CD8-positive, alpha-beta T cell (primary cell): ENCODE measurements at regions of chr6 and their contacts with region 1.

Region 1: GRCh38 chr6:17706580-17707370 is at the start of gene NUP153:
- DNase-seq: peak; percentile 98 to 100 (median 100)
- ATAC-seq: peak; percentile 77
- H3K4me3 ChIP-seq: peak within 1 kb of the TSS; percentile 84 to 96
- H3K4me3 Mint-ChIP-seq: peak within 1 kb of the TSS; percentile 88
- H3K27ac ChIP-seq: peak within 1 kb of the TSS; percentile 99
- H3K27ac Mint-ChIP-seq: peak within 1 kb of the TSS; percentile 96
- H3K4me1 ChIP-seq: peaks cover 39% of the 10 kb centered on the region
- H3K4me1 Mint-ChIP-seq: peaks cover 40% of the 10 kb centered on the region
- H3K27me3 ChIP-seq: no peaks in the 10 kb centered on the region
- H3K27me3 Mint-ChIP-seq: no peaks in the 10 kb centered on the region
- CTCF ChIP-seq: no peak
- total RNA-seq, gene NUP153: 76.4 to 77.7 TPM

Region 2: DNA sequence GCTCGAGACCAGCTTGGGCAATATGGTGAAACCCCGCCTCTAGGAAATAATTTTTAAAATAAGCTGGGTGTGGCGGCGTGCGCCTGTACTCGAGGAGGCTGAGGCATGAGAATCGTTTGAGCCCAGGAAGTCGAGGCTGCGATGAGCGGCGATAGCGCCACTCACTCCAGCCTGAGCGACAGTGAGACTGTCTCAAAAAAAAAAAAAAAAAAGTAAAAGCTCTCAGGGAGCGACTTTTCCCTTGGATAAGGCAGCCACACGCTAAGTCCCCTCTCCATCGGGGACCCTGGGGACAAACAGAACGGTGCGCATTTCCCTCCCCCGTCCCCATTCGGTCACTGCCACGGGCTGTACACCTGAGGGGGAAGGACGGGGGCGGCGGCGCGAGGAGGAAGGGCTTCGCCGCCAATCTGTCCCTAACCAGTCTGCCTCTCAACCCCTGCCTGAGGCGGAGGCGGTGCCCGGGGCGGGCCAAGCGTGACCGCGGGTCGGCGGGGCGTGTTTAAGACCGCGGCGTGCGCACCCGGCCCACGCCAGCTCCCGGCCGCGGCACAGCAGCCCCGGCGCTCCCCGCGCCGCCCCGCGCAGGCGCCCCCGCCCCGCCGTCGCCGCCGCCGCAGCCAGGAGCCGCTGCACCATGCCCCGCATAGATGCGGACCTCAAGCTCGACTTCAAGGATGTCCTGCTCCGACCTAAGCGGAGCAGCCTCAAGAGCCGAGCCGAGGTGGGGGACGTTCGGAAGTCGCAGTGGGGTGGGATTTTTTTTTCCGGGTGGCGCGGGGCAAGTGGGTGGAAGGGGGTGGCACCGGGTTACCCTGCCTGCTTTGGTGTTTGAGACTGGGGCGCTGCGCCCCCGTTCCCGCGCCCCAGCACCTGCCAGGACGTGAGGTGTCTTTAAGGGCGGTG is 1468.5 kb before region 1 on chr6 and contains the start of gene GMPR:
- CTCF ChIA-PET with region 1: no interaction called
- POLR2A ChIA-PET with region 1: no interaction called
- intact Hi-C with region 1: loop called in 1 of 2 experiments (anchors 5 kb)
- DNase-seq: peak; percentile 35 to 88 (median 73)
- ATAC-seq: peak; percentile 96
- H3K4me3 ChIP-seq: peak within 1 kb of the TSS; percentile 64 to 66
- H3K4me3 Mint-ChIP-seq: peak within 1 kb of the TSS; percentile 91
- H3K27ac ChIP-seq: no peak within 1 kb of the TSS
- H3K27ac Mint-ChIP-seq: no peak within 1 kb of the TSS
- H3K4me1 ChIP-seq: peaks cover 8% of the 10 kb centered on the region
- H3K4me1 Mint-ChIP-seq: peaks cover 22% of the 10 kb centered on the region
- H3K27me3 ChIP-seq: no peaks in the 10 kb centered on the region
- H3K27me3 Mint-ChIP-seq: peaks cover 16% of the 10 kb centered on the region
- CTCF ChIP-seq: no peak
- total RNA-seq, gene GMPR: 0.41 to 0.86 TPM

Region 3: GRCh38 chr6:17505062-17505476 is 201.7 kb before region 1 on chr6:
- CTCF ChIA-PET with region 1: no interaction called
- POLR2A ChIA-PET with region 1: no interaction called
- intact Hi-C with region 1: no loop called
- DNase-seq: peak in 1 of 9 experiments; percentile 8
- ATAC-seq: no peak
- H3K4me3 ChIP-seq: no peak overlapping the region
- H3K4me3 Mint-ChIP-seq: no peak overlapping the region
- H3K27ac ChIP-seq: no peak overlapping the region
- H3K27ac Mint-ChIP-seq: no peak overlapping the region
- H3K4me1 ChIP-seq: no peaks in the 10 kb centered on the region
- H3K4me1 Mint-ChIP-seq: no peaks in the 10 kb centered on the region
- H3K27me3 ChIP-seq: no peaks in the 10 kb centered on the region
- H3K27me3 Mint-ChIP-seq: peaks cover 2% of the 10 kb centered on the region
- CTCF ChIP-seq: no peak

Region 4: DNA sequence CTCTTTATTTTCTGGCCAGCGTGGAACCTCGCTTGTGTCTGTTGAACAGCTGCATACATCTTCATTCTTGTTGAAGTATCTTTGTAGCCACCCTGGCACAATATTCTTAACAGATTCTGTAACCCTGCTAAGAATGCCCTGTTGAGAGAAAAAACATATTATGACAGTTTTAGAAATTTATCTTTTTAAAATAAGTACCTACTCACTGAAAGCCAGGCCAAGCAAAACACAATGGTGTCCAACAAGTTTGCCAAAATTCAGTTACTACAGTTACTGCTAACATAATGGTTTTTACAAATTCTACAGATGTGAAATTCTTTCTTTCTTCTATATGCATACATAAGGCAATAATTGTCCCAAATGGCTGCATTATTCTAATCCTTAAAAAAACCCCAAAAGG is 18.3 kb before region 1 on chr6:
- CTCF ChIA-PET with region 1: interaction called, 33 read pairs
- POLR2A ChIA-PET with region 1: interaction called, 4 read pairs
- intact Hi-C with region 1: loop called in 1 of 2 experiments (anchors 2 kb)
- DNase-seq: no peak
- ATAC-seq: no peak
- H3K4me3 ChIP-seq: no peak overlapping the region
- H3K4me3 Mint-ChIP-seq: no peak overlapping the region
- H3K27ac ChIP-seq: no peak overlapping the region
- H3K27ac Mint-ChIP-seq: no peak overlapping the region
- H3K4me1 ChIP-seq: peaks cover 23% of the 10 kb centered on the region
- H3K4me1 Mint-ChIP-seq: peaks cover 68% of the 10 kb centered on the region
- H3K27me3 ChIP-seq: no peaks in the 10 kb centered on the region
- H3K27me3 Mint-ChIP-seq: no peaks in the 10 kb centered on the region
- CTCF ChIP-seq: no peak

Region 5: DNA sequence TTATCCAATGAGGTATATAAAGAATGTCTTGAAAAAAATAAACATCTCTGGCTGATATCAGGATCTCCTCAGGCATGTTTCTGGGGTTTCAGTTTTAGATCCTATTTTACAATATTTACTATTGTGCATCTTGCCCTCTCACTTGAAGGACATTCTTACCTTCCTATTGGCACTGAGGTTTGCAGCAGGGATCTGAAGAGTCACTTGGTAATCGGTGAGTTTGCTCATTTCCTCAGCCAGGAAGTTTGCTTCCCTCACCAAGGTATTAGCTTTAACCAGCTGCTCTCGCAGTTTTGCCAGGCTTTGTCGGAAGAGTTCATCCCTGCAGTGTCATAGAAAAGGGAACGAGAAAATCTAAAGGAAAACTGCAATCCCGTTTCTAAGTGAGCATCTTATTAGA is 101.8 kb after region 1 on chr6:
- CTCF ChIA-PET with region 1: interaction called, 18 read pairs
- POLR2A ChIA-PET with region 1: no interaction called
- intact Hi-C with region 1: loop called (anchors 2 to 5 kb)
- DNase-seq: no peak
- ATAC-seq: no peak
- H3K4me3 ChIP-seq: no peak overlapping the region
- H3K4me3 Mint-ChIP-seq: no peak overlapping the region
- H3K27ac ChIP-seq: no peak overlapping the region
- H3K27ac Mint-ChIP-seq: no peak overlapping the region
- H3K4me1 ChIP-seq: no peaks in the 10 kb centered on the region
- H3K4me1 Mint-ChIP-seq: peaks cover 3% of the 10 kb centered on the region
- H3K27me3 ChIP-seq: no peaks in the 10 kb centered on the region
- H3K27me3 Mint-ChIP-seq: peaks cover 19% of the 10 kb centered on the region
- CTCF ChIP-seq: no peak